ENCODE measurements at regions of chr17 and their contacts with region 1.

Region 1: GRCh38 chr17:27805520-27806146 is 5.3 kb upstream of the NOS2 start:
- DNase-seq: peak; percentile 71 to 91 (median 76)
- ATAC-seq: peak; percentile 63
- H3K4me3 ChIP-seq: peak overlapping the region; percentile 45
- H3K4me3 Mint-ChIP-seq: peak overlapping the region; percentile 75
- H3K27ac ChIP-seq: peak overlapping the region; percentile 40 to 43
- H3K27ac Mint-ChIP-seq: peak overlapping the region; percentile 75
- H3K4me1 ChIP-seq: peaks cover 37% of the 10 kb centered on the region
- H3K4me1 Mint-ChIP-seq: peaks cover 22% of the 10 kb centered on the region
- H3K27me3 ChIP-seq: no peaks in the 10 kb centered on the region
- H3K27me3 Mint-ChIP-seq: no peaks in the 10 kb centered on the region
- CTCF ChIP-seq: peak; percentile 85

Region 2: DNA sequence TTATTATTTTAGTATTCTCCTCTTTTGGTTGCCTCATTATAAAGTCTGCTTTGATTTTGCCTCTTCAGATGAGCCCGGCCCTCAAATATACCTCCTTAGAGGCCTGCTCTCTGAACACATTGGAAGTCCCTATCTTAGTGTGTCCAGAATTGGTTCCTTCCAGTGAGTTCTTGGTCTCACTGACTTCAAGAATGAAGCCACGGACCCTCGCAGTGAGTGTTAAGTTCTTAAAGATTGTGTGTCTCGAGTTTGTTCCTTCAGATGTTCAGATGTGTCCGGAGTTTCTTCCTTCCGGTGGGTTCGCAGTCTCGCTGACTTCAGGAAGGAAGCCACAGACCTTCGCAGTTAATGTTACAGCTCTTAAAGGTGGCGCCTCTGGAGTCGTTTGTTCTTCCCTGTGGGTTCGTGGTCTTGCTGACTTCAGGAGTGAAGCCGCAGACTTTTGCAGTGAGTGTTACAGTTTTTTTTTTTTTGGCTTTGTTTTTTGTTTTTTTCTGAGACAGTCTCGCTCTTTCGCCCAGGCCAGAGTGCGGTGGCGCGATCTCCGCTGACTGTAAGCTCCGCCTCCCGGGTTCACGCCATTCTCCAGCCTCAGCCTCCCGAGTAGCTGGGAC is 40.5 kb after region 1 on chr17:
- CTCF ChIA-PET with region 1: interaction called, 4 read pairs
- POLR2A ChIA-PET with region 1: interaction called, 11 read pairs
- intact Hi-C with region 1: no loop called
- DNase-seq: peak in 12 of 14 experiments; percentile 3 to 71 (median 18)
- ATAC-seq: peak; percentile 61
- H3K4me3 ChIP-seq: peak overlapping the region; percentile 37
- H3K4me3 Mint-ChIP-seq: peak overlapping the region; percentile 69
- H3K27ac ChIP-seq: peak overlapping the region in 1 of 2 donors; percentile 13
- H3K27ac Mint-ChIP-seq: peak overlapping the region; percentile 71
- H3K4me1 ChIP-seq: peaks cover 11% of the 10 kb centered on the region
- H3K4me1 Mint-ChIP-seq: peaks cover 14% of the 10 kb centered on the region
- H3K27me3 ChIP-seq: no peaks in the 10 kb centered on the region
- H3K27me3 Mint-ChIP-seq: no peaks in the 10 kb centered on the region
- CTCF ChIP-seq: no peak

Region 3: DNA sequence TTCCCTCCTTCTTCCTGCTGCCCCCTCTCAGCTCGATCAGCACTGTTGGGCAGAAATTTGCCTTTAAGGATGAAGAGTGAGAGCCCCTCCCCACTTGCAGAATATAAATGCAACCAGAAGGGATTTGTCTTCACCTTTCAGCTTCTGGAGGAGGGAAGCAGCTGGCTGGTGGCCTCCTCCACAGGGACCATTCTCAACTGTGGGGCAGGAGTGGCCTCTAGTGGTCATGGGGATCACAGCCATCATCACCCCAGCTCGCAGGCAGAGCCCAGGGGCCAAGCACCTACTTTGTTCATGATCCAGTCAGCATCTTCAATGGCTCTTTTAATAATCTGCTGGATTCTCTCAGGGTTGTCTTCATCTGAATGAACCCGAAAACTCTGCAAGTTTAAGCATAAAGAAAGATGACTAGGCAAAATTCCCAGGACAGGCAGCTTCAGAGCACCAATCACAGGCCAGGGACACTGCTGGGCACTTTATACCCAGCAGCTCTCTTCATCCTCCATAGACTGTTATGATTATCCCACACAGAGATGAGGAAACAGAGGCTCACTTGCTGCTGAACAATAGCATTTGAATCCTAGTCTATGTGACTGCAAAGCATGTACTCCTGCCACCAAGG is 74.5 kb after region 1 on chr17:
- CTCF ChIA-PET with region 1: interaction called, 63 read pairs
- POLR2A ChIA-PET with region 1: interaction called, 31 read pairs
- intact Hi-C with region 1: loop called (anchors 1 kb)
- DNase-seq: peak; percentile 28 to 77 (median 55)
- ATAC-seq: peak; percentile 73
- H3K4me3 ChIP-seq: no peak overlapping the region
- H3K4me3 Mint-ChIP-seq: no peak overlapping the region
- H3K27ac ChIP-seq: no peak overlapping the region
- H3K27ac Mint-ChIP-seq: no peak overlapping the region
- H3K4me1 ChIP-seq: peaks cover 18% of the 10 kb centered on the region
- H3K4me1 Mint-ChIP-seq: peaks cover 22% of the 10 kb centered on the region
- H3K27me3 ChIP-seq: no peaks in the 10 kb centered on the region
- H3K27me3 Mint-ChIP-seq: no peaks in the 10 kb centered on the region
- CTCF ChIP-seq: peak; percentile 66

Region 4: DNA sequence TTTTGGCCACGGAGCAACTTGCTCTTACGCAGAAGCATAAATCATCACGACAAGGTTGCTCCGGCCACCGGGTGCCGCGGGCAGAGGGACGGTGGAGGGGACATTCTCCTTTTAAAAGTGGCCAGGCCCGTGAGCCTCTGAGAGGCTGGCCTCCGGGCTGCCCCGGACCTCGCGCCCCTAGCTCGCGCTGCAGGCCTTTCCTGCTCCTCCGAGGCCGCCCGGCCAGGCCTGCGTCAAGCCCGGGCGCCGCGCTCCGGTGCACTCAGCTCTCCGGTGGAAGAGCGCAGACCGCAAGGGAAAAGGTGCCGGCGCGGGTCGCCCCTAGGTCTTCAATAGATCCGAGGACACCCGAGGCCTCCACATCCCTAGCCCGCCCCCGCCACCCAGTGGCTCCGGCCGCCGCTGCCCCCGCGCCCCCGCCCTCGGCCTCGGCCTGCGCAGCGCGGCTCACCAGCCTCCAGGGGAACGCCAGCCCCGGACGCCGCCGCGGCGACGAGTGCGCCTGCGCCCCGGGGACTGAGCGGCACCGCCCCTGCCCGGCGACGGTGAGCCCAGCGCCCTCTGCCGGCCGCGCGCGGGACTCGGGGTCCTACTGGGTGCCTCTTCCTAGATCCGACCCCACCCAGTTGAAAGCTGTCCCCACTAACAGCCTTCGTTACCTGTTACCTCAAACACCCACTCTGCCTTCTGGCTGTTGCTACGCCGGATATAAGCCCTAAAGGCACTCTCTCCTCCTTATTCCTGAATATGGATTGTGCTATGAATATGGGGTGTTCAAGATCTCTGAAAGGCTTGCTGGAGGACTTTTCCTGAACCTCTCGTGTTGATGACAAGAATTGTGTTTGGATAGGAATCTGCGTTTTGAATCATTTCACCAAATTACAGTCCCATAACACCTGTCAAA is 87.5 kb after region 1 on chr17 and contains the start of gene LYRM9:
- CTCF ChIA-PET with region 1: interaction called, 63 read pairs
- POLR2A ChIA-PET with region 1: interaction called, 128 read pairs
- intact Hi-C with region 1: loop called (anchors 1 kb)
- DNase-seq: peak; percentile 85 to 97 (median 93)
- ATAC-seq: peak; percentile 98
- H3K4me3 ChIP-seq: peak within 1 kb of the TSS; percentile 73
- H3K4me3 Mint-ChIP-seq: peak within 1 kb of the TSS; percentile 90
- H3K27ac ChIP-seq: no peak within 1 kb of the TSS
- H3K27ac Mint-ChIP-seq: peak within 1 kb of the TSS; percentile 58
- H3K4me1 ChIP-seq: peaks cover 16% of the 10 kb centered on the region
- H3K4me1 Mint-ChIP-seq: peaks cover 27% of the 10 kb centered on the region
- H3K27me3 ChIP-seq: peaks cover 0 to 7% of the 10 kb centered on the region in 2 experiments
- H3K27me3 Mint-ChIP-seq: peaks cover 31% of the 10 kb centered on the region
- CTCF ChIP-seq: peak; percentile 82
- total RNA-seq, gene LYRM9: 13.0 to 15.7 TPM

Region 5: DNA sequence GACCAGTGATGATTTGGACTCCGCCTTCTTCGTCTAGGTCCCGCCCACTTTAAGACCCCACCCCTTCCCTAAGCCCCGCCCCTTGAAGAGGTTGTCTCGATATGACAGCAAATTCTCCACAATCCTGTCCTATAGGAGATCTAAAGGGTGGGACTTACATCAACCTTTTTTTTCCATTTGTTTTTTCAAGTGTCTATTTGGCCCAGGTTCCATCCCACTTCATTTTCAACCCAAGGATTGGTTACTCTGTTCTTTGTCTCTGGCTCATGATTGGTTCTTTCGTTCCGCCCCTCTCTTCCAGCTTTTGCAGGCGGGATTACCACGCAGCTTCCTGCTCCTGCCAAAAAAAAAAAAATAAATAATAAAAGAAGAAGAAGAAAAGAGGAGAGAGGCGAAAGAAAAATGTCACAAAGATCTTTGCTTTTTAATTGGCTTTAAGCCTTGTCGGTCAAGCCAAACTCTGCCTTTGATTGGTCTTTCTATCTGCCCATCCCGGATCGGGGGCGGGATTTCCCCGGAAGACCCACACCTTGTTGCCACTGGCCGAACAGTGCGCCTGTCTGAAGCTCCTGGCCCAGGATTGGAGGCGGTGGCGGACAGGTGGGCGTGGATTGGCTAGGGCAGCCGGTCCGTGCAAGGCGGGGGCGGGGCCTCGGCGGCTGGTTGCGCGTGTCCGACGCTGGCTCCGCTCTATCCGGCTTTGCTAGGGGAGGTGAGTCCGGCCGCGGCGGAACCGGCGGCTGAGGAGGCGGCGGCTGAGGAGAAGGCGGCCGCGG is 235.6 kb after region 1 on chr17:
- CTCF ChIA-PET with region 1: no interaction called
- POLR2A ChIA-PET with region 1: interaction called, 3 read pairs
- intact Hi-C with region 1: loop called in 1 of 2 experiments (anchors 10 kb)
- DNase-seq: peak; percentile 97 to 100 (median 99)
- ATAC-seq: peak; percentile 92
- H3K4me3 ChIP-seq: peak overlapping the region; percentile 84
- H3K4me3 Mint-ChIP-seq: peak overlapping the region; percentile 93
- H3K27ac ChIP-seq: peak overlapping the region; percentile 52 to 69
- H3K27ac Mint-ChIP-seq: peak overlapping the region; percentile 82
- H3K4me1 ChIP-seq: peaks cover 30% of the 10 kb centered on the region
- H3K4me1 Mint-ChIP-seq: peaks cover 57% of the 10 kb centered on the region
- H3K27me3 ChIP-seq: no peaks in the 10 kb centered on the region
- H3K27me3 Mint-ChIP-seq: no peaks in the 10 kb centered on the region
- CTCF ChIP-seq: no peak

Region 6: DNA sequence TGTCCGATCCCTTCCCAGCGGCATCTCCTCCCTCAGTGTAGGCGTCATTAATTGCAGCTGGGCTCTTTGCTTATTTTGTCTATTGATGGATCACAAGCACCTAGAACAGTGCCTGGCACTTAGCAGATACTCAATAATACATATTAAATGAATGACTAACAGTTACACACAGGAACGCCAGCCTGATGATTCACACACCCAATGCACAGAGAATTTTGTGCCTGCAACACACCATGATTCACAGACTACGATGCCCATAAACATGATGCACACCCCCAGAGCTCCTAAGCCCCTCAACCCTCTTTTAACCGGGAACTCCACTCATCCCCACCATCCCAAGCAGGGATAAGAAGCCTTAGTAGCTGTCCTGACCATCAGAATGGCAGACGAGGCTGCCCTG is 446.8 kb after region 1 on chr17:
- CTCF ChIA-PET with region 1: interaction called, 3 read pairs
- POLR2A ChIA-PET with region 1: interaction called, 5 read pairs
- intact Hi-C with region 1: loop called in 1 of 2 experiments (anchors 1 kb)
- DNase-seq: no peak
- ATAC-seq: no peak
- H3K4me3 ChIP-seq: no peak overlapping the region
- H3K4me3 Mint-ChIP-seq: no peak overlapping the region
- H3K27ac ChIP-seq: no peak overlapping the region
- H3K27ac Mint-ChIP-seq: no peak overlapping the region
- H3K4me1 ChIP-seq: peaks cover 12% of the 10 kb centered on the region
- H3K4me1 Mint-ChIP-seq: peaks cover 8% of the 10 kb centered on the region
- H3K27me3 ChIP-seq: peaks cover 15 to 29% of the 10 kb centered on the region in 2 experiments
- H3K27me3 Mint-ChIP-seq: peaks cover 49% of the 10 kb centered on the region
- CTCF ChIP-seq: no peak

Region 7: GRCh38 chr17:28540231-28540630 is 734.6 kb after region 1 on chr17:
- CTCF ChIA-PET with region 1: no interaction called
- POLR2A ChIA-PET with region 1: no interaction called
- intact Hi-C with region 1: loop called in 1 of 2 experiments (anchors 5 kb)
- DNase-seq: no peak
- ATAC-seq: no peak
- H3K4me3 ChIP-seq: no peak overlapping the region
- H3K4me3 Mint-ChIP-seq: no peak overlapping the region
- H3K27ac ChIP-seq: no peak overlapping the region
- H3K27ac Mint-ChIP-seq: no peak overlapping the region
- H3K4me1 ChIP-seq: no peaks in the 10 kb centered on the region
- H3K4me1 Mint-ChIP-seq: no peaks in the 10 kb centered on the region
- H3K27me3 ChIP-seq: no peaks in the 10 kb centered on the region
- H3K27me3 Mint-ChIP-seq: no peaks in the 10 kb centered on the region
- CTCF ChIP-seq: no peak